OCI-LY7 (cell line): ENCODE measurements at regions of chr18 and their contacts with region 1.

Region 1: GRCh38 chr18:57446322-57446721 is 11.1 kb downstream of the ONECUT2 start:
- DNase-seq: peak; percentile 27
- H3K4me3 ChIP-seq: no peak overlapping the region
- H3K27ac ChIP-seq: no peak overlapping the region
- H3K4me1 ChIP-seq: no peaks in the 10 kb centered on the region
- CTCF ChIP-seq: peak; percentile 75

Region 2: GRCh38 chr18:56748698-56749268 is 697.5 kb before region 1 on chr18:
- CTCF ChIA-PET with region 1: no interaction called
- POLR2A ChIA-PET with region 1: no interaction called
- intact Hi-C with region 1: loop called (anchors 2 kb)
- DNase-seq: peak; percentile 7
- H3K4me3 ChIP-seq: no peak overlapping the region
- H3K27ac ChIP-seq: no peak overlapping the region
- H3K4me1 ChIP-seq: no peaks in the 10 kb centered on the region
- CTCF ChIP-seq: peak; percentile 68

Region 3: GRCh38 chr18:56869189-56869777 is 577.0 kb before region 1 on chr18:
- CTCF ChIA-PET with region 1: no interaction called
- POLR2A ChIA-PET with region 1: no interaction called
- intact Hi-C with region 1: loop called (anchors 2 kb)
- DNase-seq: peak; percentile 52
- H3K4me3 ChIP-seq: no peak overlapping the region
- H3K27ac ChIP-seq: no peak overlapping the region
- H3K4me1 ChIP-seq: peaks cover 3% of the 10 kb centered on the region
- CTCF ChIP-seq: peak; percentile 74